GM18951 (cell line): ENCODE measurements at regions of chr12 and their contacts with region 1.

Region 1: GRCh38 chr12:89524541-89525285 is at the start of gene GALNT4:
- POLR2A ChIP-seq: peak; percentile 57

Region 2: DNA sequence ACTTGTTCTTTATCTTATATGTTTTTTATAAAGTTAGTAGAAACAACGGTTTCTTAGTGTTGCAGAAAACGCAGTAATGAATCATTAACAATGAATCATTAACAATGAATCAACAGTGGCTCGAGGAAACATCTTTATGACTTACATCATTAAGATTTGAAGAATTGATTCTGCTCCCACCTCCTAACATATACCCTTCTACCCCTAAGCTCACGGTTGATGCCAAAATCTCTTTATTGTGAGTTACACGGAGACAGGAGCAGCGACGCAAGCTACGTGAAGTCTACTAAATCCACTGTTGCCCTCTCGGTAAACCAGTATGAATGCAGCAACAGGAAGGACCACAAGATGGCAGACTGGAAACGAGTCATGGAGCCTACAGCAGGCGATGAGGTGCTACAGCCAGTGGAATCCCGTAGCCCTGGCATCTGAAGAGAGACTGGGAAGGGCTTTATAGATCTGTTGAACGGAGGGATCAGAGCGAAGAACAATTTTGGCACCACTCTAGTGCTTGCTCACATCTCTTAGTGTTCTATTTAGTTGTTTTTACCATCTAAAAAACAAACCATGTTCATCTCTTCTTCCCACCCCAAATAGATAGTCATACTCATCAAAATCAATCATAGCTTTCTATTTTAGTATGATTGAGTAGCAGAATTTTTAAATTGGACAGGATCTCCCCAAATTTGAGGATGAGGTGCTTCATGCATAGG is 505.1 kb before region 1 on chr12:
- in situ Hi-C with region 1: loop called (anchors 5 kb)
- POLR2A ChIP-seq: no peak

Region 3: DNA sequence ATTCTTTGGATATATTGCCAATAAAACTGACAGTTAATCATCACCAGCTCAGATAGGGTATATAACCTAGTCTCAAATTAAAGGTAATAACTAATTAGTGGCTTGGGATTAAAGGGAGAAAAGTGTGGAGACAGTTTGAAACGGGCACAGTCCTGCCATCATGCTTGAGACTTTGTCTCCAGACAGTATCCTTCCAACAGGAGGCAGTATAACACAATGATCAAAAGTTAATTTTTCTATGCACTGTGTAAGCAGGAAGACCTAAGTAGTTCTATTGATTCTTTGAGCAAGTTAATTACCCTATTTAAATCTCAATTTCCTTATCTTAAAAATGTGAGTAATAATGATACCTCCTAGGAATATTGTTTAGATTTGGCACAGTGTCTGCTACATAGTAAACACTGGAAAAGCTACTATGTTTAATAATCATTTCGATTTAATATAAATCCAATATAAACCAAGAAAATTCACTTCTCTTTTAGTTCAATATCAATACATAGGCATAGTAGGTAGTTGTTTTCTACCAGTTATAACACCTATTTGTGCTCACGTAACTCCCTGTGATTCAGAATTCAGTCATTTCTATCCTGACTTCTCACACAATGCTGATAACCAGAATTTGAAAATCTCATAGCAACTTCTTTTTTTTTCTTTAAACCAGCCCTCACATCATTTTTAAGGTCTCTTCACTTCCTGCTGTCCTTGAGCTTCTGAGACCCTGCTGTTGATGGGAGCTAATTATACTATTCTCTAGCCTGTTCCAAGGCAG is 53.8 kb before region 1 on chr12:
- in situ Hi-C with region 1: loop called (anchors 10 kb)
- POLR2A ChIP-seq: no peak

Region 4: GRCh38 chr12:90253674-90254181 is 729.0 kb after region 1 on chr12:
- in situ Hi-C with region 1: loop called (anchors 25 kb)
- POLR2A ChIP-seq: no peak

Region 5: GRCh38 chr12:90515199-90516175 is 990.8 kb after region 1 on chr12:
- in situ Hi-C with region 1: loop called (anchors 25 kb)
- POLR2A ChIP-seq: no peak